PC-3 (cell line): ENCODE measurements at regions of chr10 and their contacts with region 1.

Region 1: GRCh38 chr10:60549686-60550085 is 160.0 kb upstream of the ANK3 start:
- DNase-seq: peak; percentile 89
- ATAC-seq: peak; percentile 99
- H3K4me3 ChIP-seq: no peak overlapping the region
- H3K27ac ChIP-seq: no peak overlapping the region
- H3K4me1 ChIP-seq: no peaks in the 10 kb centered on the region
- H3K27me3 ChIP-seq: no peaks in the 10 kb centered on the region
- CTCF ChIP-seq: peak; percentile 97

Region 2: GRCh38 chr10:60536529-60537114 is 13.1 kb before region 1 on chr10:
- CTCF ChIA-PET with region 1: no interaction called
- POLR2A ChIA-PET with region 1: no interaction called
- intact Hi-C with region 1: loop called (anchors 1 kb)
- DNase-seq: peak; percentile 98
- ATAC-seq: peak; percentile 86
- H3K4me3 ChIP-seq: peak overlapping the region; percentile 8
- H3K27ac ChIP-seq: peak overlapping the region; percentile 59
- H3K4me1 ChIP-seq: peaks cover 54% of the 10 kb centered on the region
- H3K27me3 ChIP-seq: no peaks in the 10 kb centered on the region
- CTCF ChIP-seq: no peak; the same call in 1 of the 2 replicates

Region 3: GRCh38 chr10:60618861-60619260 is 69.2 kb after region 1 on chr10:
- CTCF ChIA-PET with region 1: no interaction called
- POLR2A ChIA-PET with region 1: no interaction called
- intact Hi-C with region 1: loop called (anchors 1 kb)
- DNase-seq: peak; percentile 55
- ATAC-seq: peak; percentile 81
- H3K4me3 ChIP-seq: no peak overlapping the region
- H3K27ac ChIP-seq: no peak overlapping the region
- H3K4me1 ChIP-seq: peaks cover 15% of the 10 kb centered on the region; the same call in 1 of the 2 replicates
- H3K27me3 ChIP-seq: no peaks in the 10 kb centered on the region
- CTCF ChIP-seq: peak; percentile 69

Region 4: GRCh38 chr10:60769406-60769805 is 219.7 kb after region 1 on chr10:
- CTCF ChIA-PET with region 1: no interaction called
- POLR2A ChIA-PET with region 1: no interaction called
- intact Hi-C with region 1: loop called (anchors 1 kb)
- DNase-seq: no peak
- ATAC-seq: no peak
- H3K4me3 ChIP-seq: no peak overlapping the region
- H3K27ac ChIP-seq: no peak overlapping the region
- H3K4me1 ChIP-seq: no peaks in the 10 kb centered on the region
- H3K27me3 ChIP-seq: no peaks in the 10 kb centered on the region
- CTCF ChIP-seq: no peak